Vagina (tissue), 2 donors: ENCODE measurements at regions of chr6 and their contacts with region 1.

Region 1: DNA sequence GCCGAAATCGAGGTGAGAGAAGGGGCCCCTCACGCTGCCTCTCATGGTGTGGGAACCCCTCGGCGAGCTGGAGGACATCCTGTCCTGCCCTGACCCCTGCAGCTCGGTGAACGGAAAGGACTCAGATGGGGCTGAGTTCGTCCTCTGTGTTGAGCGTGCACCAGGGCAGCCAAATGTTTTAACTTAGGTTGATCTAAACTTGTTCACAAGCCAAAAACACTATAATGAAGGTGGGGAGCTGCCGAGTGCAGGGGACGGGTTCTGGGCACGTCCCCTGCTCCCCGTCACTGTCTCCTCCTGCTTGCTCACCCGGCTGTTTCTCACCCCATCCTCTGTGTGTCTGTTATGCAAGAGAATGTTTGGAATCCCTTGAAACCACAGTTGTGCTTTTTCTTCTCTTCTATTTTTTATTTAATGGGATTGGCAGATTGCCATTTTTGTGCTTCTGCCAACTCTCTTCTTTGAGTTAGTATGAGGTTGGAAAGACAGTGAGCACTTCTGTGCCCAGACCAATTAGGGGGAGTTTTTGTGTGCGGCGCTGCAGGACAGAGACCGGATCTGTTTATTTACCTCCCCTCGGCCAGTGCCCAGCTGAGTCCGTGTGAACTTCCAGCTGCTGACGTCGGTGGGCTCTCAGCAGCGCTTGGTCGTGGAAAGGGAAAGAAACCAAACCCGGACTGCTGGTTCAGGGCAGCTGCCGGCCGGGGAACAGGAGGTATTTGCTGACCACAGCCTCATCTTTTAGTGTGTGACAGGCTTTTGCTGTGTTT is 158.1 kb downstream of the DTNBP1 start:
- DNase-seq: peak in 1 of 2 donors; percentile 93
- H3K4me3 ChIP-seq: peak overlapping the region in 1 of 2 donors; percentile 27
- H3K27ac ChIP-seq: peak overlapping the region; percentile 43
- H3K4me1 ChIP-seq: peaks cover 32% of the 10 kb centered on the region
- H3K27me3 ChIP-seq: no peaks in the 10 kb centered on the region
- CTCF ChIP-seq: no peak
- POLR2A ChIP-seq: no peak

Region 2: DNA sequence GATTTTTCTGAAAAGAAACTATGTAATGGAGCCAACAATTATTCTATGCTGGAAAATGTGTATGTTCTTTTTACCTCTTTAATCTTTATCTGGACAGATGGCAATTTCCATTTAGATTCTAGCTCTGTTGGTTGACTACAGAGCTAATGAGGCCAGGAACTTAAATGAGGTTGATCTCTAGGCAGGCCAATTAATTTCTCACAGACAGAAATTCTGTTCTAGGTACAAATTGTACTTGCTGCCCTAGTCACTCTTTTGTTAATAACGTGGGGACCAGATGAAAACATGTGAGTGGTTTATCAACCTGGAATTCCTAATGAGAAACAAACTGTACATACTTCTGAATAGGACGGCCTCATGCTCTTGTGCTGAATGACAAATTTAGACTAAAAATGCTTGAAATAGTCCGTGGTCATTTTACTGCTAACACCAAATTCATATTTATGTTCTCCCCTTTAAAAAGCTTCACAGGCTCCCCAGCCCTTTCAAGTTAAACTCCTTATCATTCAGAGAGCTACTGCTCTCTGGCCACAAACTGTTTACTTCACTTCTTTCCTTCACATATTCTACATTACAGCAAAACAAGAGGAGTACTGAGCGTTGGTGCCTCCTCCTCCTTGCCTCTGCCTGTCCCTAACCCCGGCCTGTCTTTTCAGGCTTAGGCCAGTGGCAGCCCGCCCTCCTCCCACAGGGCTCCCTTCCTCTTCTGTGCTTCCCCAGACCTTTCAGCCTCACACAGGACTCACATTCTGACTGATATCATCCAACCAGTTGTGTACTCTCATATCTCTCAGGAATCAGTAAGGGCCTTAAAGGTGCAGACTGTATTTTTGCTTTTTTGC is 116.7 kb after region 1 on chr6:
- intact Hi-C with region 1: loop called (anchors 10 kb)
- DNase-seq: no peak
- H3K4me3 ChIP-seq: no peak overlapping the region
- H3K27ac ChIP-seq: no peak overlapping the region
- H3K4me1 ChIP-seq: no peaks in the 10 kb centered on the region
- H3K27me3 ChIP-seq: no peaks in the 10 kb centered on the region
- CTCF ChIP-seq: no peak
- POLR2A ChIP-seq: no peak

Region 3: GRCh38 chr6:15841937-15842705 is 337.4 kb after region 1 on chr6:
- intact Hi-C with region 1: no loop called
- DNase-seq: no peak
- H3K4me3 ChIP-seq: no peak overlapping the region
- H3K27ac ChIP-seq: peak overlapping the region; percentile 18
- H3K4me1 ChIP-seq: no peaks in the 10 kb centered on the region
- H3K27me3 ChIP-seq: no peaks in the 10 kb centered on the region
- CTCF ChIP-seq: no peak
- POLR2A ChIP-seq: no peak